ENCODE measurements at regions of chr6 and their contacts with region 1.

Region 1: DNA sequence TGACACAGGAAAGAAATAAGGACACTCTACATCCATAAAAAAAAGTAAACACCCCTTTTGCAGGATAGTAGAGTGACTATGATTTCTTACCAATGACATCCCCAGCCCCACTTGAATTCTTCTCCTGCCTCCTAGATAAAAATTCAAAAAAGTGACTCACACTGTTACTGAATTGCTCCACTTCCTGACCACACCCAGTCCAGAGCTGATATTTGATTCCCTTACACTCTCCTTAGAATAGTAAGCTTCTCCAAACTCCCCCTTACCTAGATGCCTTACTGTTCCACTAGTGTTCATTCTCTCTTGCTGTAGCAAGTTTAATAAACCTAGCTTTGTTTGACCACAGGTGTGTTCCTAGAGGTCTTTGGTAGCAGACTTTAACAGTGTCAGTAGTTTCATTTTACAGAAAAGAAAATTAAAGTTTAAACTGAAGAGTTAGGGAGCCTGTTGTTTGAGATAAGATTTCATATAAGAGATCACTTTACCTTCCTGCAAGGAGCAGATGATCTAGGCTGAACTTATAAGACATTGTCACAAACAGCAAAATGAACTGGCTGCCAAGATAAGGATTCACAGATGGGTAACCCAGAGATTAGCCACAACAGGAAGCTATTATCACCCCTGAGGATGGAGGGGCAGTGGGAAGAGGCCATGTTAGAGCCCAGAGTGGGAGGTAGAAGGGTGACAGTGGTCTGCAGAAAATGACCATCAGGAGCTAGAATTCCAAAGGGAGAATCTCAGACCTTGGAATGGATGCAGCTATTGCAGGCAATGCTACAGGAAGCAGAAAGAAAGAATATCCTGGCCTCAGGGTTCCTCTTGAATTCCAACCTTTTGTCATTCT is 28.4 kb upstream of the BTN3A2 start:
- DNase-seq: no peak
- ATAC-seq: no peak

Region 2: GRCh38 chr6:26322645-26323482 is 13.7 kb before region 1 on chr6:
- intact Hi-C with region 1: no loop called
- DNase-seq: no peak
- ATAC-seq: peak; percentile 94

Region 3: DNA sequence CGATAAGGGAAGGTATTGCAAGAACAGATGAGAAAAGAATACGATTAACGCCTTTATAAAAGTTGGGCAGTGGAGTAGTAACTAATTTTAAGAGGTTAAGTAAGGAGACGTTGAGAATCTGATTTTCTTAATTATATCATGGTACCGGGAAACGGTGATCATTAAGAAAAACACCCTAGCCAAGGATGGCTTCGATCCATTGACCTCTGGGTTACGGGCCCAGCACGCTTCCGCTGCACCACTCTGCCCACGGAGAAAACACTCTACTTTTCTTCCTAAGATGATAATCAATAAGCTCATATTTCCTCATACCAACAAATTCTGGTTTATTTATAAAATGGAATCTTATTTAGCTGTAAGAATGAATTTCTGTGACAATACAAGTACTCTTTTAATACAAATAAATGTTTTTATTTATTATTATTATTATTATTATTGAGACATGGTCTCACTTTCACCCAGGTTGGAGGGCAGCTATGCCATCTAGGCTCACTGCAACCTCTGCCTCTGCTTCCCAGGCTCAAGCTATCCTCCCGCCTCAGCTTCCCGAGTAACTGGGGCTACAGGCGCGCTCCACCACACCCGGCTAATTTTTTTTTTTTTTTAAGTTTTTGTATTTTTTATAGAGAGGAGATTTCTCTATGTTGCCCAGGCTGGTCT is 967.2 kb after region 1 on chr6:
- intact Hi-C with region 1: no loop called
- DNase-seq: no peak
- ATAC-seq: no peak

Region 4: DNA sequence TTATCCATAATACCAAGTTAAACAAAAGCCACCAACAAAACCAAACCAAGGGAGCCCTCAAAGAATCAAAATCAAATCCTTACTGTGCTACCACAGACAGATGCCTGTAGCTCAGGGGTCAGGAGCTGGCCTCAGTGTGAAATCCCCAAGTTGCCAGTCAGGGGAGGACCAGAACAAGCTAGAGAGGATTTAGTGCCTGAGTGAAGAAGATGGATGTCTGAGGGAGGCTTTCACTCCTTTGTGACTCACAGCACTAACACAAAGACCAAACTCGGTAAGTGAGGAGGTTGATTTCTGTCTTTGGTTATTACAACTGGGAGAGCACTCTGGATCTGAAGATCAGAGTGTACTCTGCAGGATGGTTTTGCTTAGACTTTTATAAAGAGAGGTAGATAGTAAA is 1326.2 kb after region 1 on chr6:
- intact Hi-C with region 1: loop called (anchors 5 kb)
- DNase-seq: no peak
- ATAC-seq: no peak